Prostate gland (tissue), 2 donors: ENCODE measurements at regions of chr4 and their contacts with region 1.

Region 1: DNA sequence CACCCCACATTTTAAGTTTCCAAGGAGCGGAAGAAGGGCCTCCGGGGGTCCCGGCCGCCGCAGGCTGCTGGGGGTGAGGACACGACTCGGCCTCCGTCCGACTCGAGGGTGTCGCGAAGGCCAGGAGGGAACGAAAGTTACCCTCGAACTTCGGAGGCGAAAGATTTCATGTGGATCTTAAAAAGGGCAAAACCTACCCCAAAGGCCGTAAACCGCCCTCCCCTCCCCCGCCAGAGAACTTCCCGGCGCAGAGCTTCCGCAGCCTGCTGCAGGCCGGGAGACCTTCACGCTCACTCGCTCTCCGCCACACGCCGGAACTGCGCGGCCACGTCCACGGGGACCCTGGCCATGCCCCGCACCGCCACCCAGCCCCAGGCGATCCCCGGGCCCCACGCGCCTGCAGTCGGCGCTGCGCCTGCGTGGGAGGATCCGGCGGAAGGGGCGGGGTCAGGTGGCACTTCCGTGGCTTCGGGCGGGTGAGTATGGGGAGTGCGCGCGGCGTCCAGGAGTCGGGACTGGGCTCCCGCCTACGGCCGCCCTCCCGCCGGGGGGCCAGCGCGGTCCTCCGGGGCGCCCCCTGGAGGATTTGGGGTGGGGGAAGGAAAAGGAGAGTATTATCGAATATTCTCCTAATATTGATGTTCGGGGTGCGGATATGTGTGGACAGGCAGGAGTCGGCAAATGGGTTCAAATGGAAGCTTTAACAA is at the start of gene MMAA:
- DNase-seq: peak; percentile 93
- H3K4me3 ChIP-seq: peak within 1 kb of the TSS; percentile 67 to 78
- H3K27ac ChIP-seq: peak within 1 kb of the TSS; percentile 88 to 95
- H3K4me1 ChIP-seq: no peaks in the 10 kb centered on the region
- H3K27me3 ChIP-seq: no peaks in the 10 kb centered on the region
- CTCF ChIP-seq: peak in 3 of 4 experiments; percentile 60 to 77 (median 65)
- POLR2A ChIP-seq: peak; percentile 90
- total RNA-seq, gene MMAA: 3.6 TPM

Region 2: DNA sequence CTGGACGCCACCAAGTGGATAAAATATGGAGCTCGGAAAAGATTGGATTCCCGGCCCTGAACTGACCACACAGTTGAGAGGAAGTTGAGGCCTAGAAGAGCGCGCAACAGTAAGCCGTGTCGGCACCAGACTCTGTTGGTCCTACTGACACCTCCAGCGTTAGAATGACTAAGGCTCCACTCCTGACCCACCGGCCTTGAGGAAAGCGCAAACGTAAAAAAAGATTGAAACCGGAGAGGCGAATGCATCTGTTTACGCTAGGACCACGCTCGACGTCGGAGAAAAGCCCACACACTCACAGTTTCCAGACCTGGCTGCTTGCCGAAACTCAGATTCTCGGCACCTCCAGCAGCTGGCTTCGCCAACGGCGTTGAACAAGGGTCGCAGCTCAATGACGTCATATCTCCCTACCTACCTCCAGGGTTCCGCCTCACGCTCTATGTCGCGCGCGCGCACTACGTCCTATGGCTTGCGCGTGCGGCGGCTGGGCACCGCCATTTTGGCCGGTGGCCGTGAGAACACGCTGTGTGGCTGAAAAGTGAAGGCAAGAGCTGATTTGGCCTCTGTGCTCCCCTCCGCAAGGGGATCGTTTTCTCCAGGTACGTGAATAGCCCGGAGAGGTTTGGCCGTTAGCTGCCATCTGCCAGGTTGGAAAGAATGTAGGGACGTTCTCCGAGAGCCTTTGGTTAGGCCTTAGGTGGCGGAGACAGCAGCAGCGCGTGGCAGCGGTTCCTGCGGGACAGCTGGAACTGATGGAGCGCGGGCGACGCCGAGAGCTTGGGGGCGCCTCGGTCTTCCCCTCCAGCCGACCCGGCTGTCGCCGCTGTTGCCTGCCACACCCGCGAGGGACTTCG is 521.0 kb before region 1 on chr4 and contains the starts of genes ABCE1 and ANAPC10:
- intact Hi-C with region 1: loop called (anchors 2 kb)
- DNase-seq: peak; percentile 96
- H3K4me3 ChIP-seq: peak within 1 kb of the TSS; percentile 50 to 70
- H3K27ac ChIP-seq: peak within 1 kb of the TSS; percentile 88 to 89
- H3K4me1 ChIP-seq: peaks cover 4% of the 10 kb centered on the region
- H3K27me3 ChIP-seq: no peaks in the 10 kb centered on the region
- CTCF ChIP-seq: peak in 1 of 4 experiments; percentile 3
- POLR2A ChIP-seq: no peak
- total RNA-seq, gene ABCE1: 41.1 to 61.0 TPM
- total RNA-seq, gene ANAPC10: 22.3 to 31.4 TPM

Region 3: DNA sequence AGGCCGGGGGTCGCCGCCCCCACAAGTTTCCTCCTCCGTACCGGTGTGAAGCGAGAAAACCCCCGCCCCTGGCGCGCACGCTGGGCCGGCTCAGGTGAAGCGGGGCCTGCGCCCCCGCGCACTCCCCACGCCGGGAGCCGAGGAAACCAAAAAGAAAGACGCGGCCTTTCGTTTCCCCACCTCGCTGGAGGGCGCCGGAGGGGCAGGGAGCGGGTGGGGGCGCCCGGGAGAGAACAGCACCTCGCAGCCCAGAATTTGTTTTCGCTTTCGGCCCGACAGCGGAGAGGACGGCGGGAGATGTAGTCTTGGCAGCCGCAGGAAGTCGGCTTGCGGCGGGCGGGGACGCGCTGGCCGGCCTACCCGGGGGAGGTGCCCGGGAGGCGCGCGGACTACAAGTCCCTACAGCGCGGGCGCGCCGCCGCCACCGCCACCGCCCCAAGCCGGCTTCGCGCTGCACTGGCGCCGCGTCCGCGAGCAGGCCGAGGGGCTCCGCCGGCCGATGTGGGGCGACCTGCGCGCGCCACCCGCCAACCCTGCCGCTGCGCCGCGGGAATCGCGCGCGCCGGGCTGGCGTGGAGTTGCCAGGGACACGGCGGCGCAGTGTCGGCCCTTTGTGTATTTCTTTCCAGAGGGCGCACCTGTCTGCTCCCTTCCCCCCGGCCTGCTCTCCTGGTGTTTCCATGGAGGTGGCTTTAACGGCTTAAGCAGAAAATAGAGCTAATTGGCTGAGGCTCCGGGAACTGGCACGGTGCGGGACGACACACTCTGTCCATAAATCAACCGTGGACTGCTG is 438.6 kb before region 1 on chr4 and contains the start of gene OTUD4:
- intact Hi-C with region 1: loop called (anchors 5 kb)
- DNase-seq: peak; percentile 96
- H3K4me3 ChIP-seq: peak within 1 kb of the TSS; percentile 60 to 87
- H3K27ac ChIP-seq: peak within 1 kb of the TSS; percentile 95 to 96
- H3K4me1 ChIP-seq: no peaks in the 10 kb centered on the region
- H3K27me3 ChIP-seq: no peaks in the 10 kb centered on the region
- CTCF ChIP-seq: peak in 1 of 4 experiments; percentile 26
- POLR2A ChIP-seq: peak; percentile 69
- total RNA-seq, gene OTUD4: 22.2 to 43.2 TPM

Region 4: GRCh38 chr4:145251391-145251790 is 367.7 kb before region 1 on chr4:
- intact Hi-C with region 1: no loop called
- DNase-seq: no peak
- H3K4me3 ChIP-seq: no peak overlapping the region
- H3K27ac ChIP-seq: no peak overlapping the region
- H3K4me1 ChIP-seq: no peaks in the 10 kb centered on the region
- H3K27me3 ChIP-seq: no peaks in the 10 kb centered on the region
- CTCF ChIP-seq: no peak
- POLR2A ChIP-seq: no peak

Region 5: DNA sequence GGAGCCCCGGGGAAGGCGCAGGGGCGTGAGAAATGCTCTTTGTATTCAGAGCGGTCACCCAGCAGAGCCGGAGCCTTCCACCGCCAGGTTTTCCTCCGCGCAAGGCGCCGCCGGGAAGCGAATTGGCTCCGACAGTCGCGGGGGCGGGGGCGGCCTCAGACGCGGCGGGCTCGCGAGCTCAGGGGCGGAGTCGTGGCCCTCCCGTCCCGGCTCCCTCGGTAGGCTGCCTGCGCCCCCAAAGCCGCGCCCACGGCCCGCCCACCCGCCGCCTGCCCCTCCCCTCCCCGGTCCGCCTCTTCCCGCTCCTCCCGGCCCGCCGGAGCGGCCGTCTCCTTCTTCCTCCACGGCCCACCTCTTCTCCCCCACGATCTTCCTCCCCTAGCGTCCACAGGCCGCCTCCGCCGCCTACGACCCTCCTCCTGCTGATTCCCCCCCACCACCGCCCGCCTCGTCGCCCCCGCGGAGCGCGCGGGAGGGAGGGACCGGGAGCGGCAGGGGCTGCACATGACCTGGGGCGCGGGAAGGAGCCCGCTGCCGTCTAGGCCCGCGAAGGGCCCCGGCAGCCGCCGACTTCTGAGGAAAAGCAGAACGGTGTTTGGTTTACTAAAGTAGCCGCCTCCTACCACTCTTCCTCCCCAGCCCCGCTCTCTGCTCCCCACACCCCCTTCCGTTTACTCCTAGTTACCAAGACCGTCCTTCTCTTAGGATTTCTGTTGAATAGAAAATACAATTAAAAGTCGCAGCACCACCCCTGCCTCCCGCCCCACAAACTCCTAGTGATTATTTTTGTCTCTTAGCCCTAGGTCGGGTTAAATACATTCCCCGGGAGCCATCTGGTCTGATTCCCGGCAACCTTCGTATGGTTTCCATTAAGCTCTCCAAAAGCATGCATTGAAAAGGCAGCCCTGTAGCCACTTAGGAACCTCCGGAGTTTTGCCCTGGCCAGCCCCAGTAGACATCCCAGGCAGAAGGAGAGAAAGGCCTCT is 114.1 kb after region 1 on chr4:
- intact Hi-C with region 1: loop called (anchors 2 kb)
- DNase-seq: peak; percentile 95
- H3K4me3 ChIP-seq: peak overlapping the region; percentile 45 to 60
- H3K27ac ChIP-seq: peak overlapping the region; percentile 97 to 98
- H3K4me1 ChIP-seq: peaks cover 30% of the 10 kb centered on the region
- H3K27me3 ChIP-seq: no peaks in the 10 kb centered on the region
- CTCF ChIP-seq: peak in 2 of 4 experiments; percentile 31 to 37
- POLR2A ChIP-seq: peak; percentile 75

Region 6: GRCh38 chr4:145887241-145887991 is 268.3 kb after region 1 on chr4:
- intact Hi-C with region 1: loop called (anchors 2 kb)
- DNase-seq: peak; percentile 17
- H3K4me3 ChIP-seq: no peak overlapping the region
- H3K27ac ChIP-seq: peak overlapping the region; percentile 52 to 55
- H3K4me1 ChIP-seq: peaks cover 6% of the 10 kb centered on the region
- H3K27me3 ChIP-seq: no peaks in the 10 kb centered on the region
- CTCF ChIP-seq: peak in 2 of 4 experiments; percentile 21 to 27
- POLR2A ChIP-seq: no peak